Heart left ventricle (tissue), 16 donors: ENCODE measurements at regions of chr7 and their contacts with region 1.

Region 1: GRCh38 chr7:148747275-148747674 is 48.6 kb downstream of the CUL1 start:
- DNase-seq: no peak
- ATAC-seq: no peak
- H3K4me3 ChIP-seq: no peak overlapping the region
- H3K27ac ChIP-seq: no peak overlapping the region
- H3K4me1 ChIP-seq: no peaks in the 10 kb centered on the region
- H3K27me3 ChIP-seq: no peaks in the 10 kb centered on the region
- CTCF ChIP-seq: no peak
- POLR2A ChIP-seq: no peak

Region 2: GRCh38 chr7:147483634-147484292 is 1263.5 kb before region 1 on chr7:
- intact Hi-C with region 1: no loop called
- DNase-seq: no peak
- ATAC-seq: no peak
- H3K4me3 ChIP-seq: no peak overlapping the region
- H3K27ac ChIP-seq: no peak overlapping the region
- H3K4me1 ChIP-seq: no peaks in the 10 kb centered on the region
- H3K27me3 ChIP-seq: no peaks in the 10 kb centered on the region
- CTCF ChIP-seq: no peak
- POLR2A ChIP-seq: no peak

Region 3: DNA sequence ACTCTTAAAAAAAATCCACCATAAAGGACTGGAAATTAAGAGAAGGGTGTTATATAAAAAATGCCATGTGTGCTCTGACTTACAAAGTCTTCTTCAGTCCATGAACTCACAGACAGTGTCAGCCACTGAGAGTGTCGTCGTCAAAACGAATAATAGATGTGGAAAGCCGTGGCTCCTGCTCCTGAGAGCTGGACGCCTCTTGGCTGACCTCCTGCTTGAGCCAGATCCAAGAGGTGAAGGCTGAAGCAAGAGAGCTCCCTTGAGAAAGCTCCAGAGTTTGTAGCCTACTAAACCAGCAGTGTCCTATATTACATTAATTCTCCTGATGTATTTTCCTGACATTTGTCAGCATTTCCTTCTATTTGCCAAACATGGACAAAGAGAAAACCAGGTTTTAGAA is 391.0 kb before region 1 on chr7:
- intact Hi-C with region 1: no loop called
- DNase-seq: peak; percentile 41 to 70 (median 57)
- ATAC-seq: peak in 3 of 4 donors; percentile 71 to 82 (median 72)
- H3K4me3 ChIP-seq: no peak overlapping the region
- H3K27ac ChIP-seq: no peak overlapping the region
- H3K4me1 ChIP-seq: peaks cover 0 to 12% (median 0%) of the 10 kb centered on the region in 12 donors
- H3K27me3 ChIP-seq: peaks cover 0 to 11% (median 0%) of the 10 kb centered on the region in 9 donors
- CTCF ChIP-seq: no peak
- POLR2A ChIP-seq: no peak

Region 4: DNA sequence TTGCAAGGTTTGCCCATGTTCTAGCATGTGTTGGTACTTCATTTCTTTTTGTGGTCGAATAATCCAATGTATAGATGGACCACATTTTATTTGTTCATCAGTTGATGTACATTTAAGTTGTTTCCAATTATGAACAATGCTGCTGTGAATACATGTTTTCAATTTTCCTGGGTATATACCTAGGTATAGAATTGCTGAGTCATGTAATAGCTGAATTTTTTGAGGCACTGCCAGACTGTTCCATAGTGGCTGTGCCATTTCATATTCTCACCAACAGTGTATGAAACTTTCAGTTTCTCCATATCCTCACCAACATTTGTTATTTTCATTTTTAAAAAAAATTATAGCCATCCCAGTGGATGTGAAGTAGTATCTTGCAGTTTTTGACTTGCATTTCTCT is 46.3 kb after region 1 on chr7:
- intact Hi-C with region 1: loop called in 1 of 10 experiments (anchors 5 kb)
- DNase-seq: no peak
- ATAC-seq: no peak
- H3K4me3 ChIP-seq: no peak overlapping the region
- H3K27ac ChIP-seq: no peak overlapping the region
- H3K4me1 ChIP-seq: no peaks in the 10 kb centered on the region
- H3K27me3 ChIP-seq: no peaks in the 10 kb centered on the region
- CTCF ChIP-seq: no peak
- POLR2A ChIP-seq: no peak